Heart right ventricle (tissue), 16 donors: ENCODE measurements at regions of chr5 and their contacts with region 1.

Region 1: GRCh38 chr5:54415896-54416601 is 39.5 kb upstream of the HSPB3 start:
- DNase-seq: no peak
- ATAC-seq: no peak
- H3K4me3 ChIP-seq: no peak overlapping the region
- H3K27ac ChIP-seq: no peak overlapping the region
- H3K4me1 ChIP-seq: peaks cover 0 to 3% (median 0%) of the 10 kb centered on the region in 9 donors
- H3K27me3 ChIP-seq: no peaks in the 10 kb centered on the region
- CTCF ChIP-seq: no peak

Region 2: GRCh38 chr5:54230936-54231685 is 184.9 kb before region 1 on chr5:
- intact Hi-C with region 1: no loop called
- DNase-seq: no peak
- ATAC-seq: no peak
- H3K4me3 ChIP-seq: no peak overlapping the region
- H3K27ac ChIP-seq: no peak overlapping the region
- H3K4me1 ChIP-seq: peaks cover 0 to 67% (median 25%) of the 10 kb centered on the region in 9 donors
- H3K27me3 ChIP-seq: no peaks in the 10 kb centered on the region
- CTCF ChIP-seq: no peak

Region 3: DNA sequence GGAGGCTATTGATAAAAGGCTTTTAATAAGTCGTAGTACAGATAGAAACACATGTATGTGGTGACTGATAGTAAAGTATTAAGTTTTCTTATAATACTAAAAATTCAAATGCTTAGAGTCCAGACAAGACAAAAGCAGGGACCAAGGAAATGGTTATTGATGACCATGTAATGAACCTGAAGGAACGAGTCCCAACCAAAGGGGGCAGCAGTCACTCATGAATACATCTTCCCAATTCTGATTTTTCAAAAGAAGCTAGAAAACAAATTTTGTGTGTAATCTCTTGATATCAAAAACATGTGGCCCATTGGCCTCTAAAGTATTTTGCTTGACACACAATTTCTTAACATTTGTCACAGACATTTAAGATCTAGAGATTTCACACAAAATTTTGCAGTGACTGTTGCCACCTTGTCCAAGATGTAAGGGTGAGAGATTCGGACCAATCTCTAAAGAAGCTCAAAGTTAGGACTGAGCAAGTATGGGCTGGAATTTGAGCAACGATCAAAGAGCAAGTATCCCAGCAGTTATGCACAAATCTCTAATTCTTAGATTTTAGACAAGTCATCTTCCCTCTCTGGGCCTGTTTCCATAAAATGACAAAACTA is 172.5 kb before region 1 on chr5:
- intact Hi-C with region 1: loop called in 4 of 10 experiments (anchors 2 to 5 kb)
- DNase-seq: peak in 1 of 2 donors; percentile 21
- ATAC-seq: no peak
- H3K4me3 ChIP-seq: no peak overlapping the region
- H3K27ac ChIP-seq: no peak overlapping the region
- H3K4me1 ChIP-seq: peaks cover 0 to 70% (median 14%) of the 10 kb centered on the region in 9 donors
- H3K27me3 ChIP-seq: no peaks in the 10 kb centered on the region
- CTCF ChIP-seq: peak; percentile 29 to 81 (median 70)

Region 4: GRCh38 chr5:54249210-54250028 is 166.6 kb before region 1 on chr5:
- intact Hi-C with region 1: loop called in 8 of 10 experiments (anchors 2 to 5 kb)
- DNase-seq: peak; percentile 24 to 29
- ATAC-seq: peak in 3 of 8 donors; percentile 15 to 41 (median 25)
- H3K4me3 ChIP-seq: no peak overlapping the region
- H3K27ac ChIP-seq: peak overlapping the region in 1 of 10 donors; percentile 70
- H3K4me1 ChIP-seq: peaks cover 0 to 89% (median 30%) of the 10 kb centered on the region in 9 donors
- H3K27me3 ChIP-seq: no peaks in the 10 kb centered on the region
- CTCF ChIP-seq: no peak

Region 5: DNA sequence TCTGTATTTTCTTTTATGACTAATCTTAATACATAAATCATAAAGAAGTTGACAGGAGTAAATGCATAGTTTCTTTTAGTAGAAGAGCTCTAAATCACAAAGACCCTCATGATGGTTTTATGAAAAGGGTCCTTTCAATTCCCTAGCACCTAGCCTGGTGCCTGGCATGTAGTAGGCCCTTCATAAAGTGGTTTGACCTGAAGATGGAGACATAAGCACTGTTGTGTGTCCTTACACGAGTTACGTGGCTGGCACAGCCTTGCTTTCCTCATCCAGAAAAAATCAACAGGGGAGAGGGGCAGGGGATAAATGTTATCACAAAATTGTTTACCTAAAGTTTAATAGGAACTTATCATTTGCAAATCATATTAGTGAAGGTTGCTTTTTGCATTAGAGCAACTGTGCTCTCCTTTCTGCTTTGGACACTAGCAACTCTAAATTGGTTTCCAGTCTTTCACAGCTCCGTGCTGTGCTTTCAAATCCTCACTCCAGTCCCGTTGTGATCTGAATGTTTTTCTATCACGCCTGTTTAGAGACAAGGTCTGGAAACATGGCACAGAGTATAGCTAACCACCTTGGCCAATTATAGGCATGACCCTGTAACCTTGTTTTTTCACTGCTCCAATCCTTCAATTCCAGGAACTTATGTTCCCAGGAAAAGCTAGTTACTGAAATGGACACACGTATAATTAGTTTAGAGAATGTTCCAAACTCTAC is 161.4 kb before region 1 on chr5:
- intact Hi-C with region 1: loop called in 9 of 10 experiments (anchors 2 to 5 kb)
- DNase-seq: peak in 1 of 2 donors; percentile 30
- ATAC-seq: peak; percentile 66 to 90 (median 86)
- H3K4me3 ChIP-seq: peak overlapping the region in 9 of 10 donors; percentile 4 to 46 (median 25)
- H3K27ac ChIP-seq: peak overlapping the region; percentile 20 to 75 (median 65)
- H3K4me1 ChIP-seq: peaks cover 0 to 82% (median 37%) of the 10 kb centered on the region in 9 donors
- H3K27me3 ChIP-seq: no peaks in the 10 kb centered on the region
- CTCF ChIP-seq: peak; percentile 15 to 70 (median 49)

Region 6: GRCh38 chr5:54310433-54311175 is 105.4 kb before region 1 on chr5 and contains the start of gene ARL15:
- intact Hi-C with region 1: loop called in 9 of 10 experiments (anchors 5 to 10 kb)
- DNase-seq: peak; percentile 98 to 99
- ATAC-seq: peak; percentile 97 to 99 (median 98)
- H3K4me3 ChIP-seq: peak within 1 kb of the TSS; percentile 73 to 96 (median 87)
- H3K27ac ChIP-seq: peak within 1 kb of the TSS; percentile 75 to 95 (median 90)
- H3K4me1 ChIP-seq: peaks cover 0 to 34% (median 25%) of the 10 kb centered on the region in 9 donors
- H3K27me3 ChIP-seq: no peaks in the 10 kb centered on the region
- CTCF ChIP-seq: no peak
- total RNA-seq, gene ARL15: 22.6 to 31.8 (median 28.7) TPM

Region 7: DNA sequence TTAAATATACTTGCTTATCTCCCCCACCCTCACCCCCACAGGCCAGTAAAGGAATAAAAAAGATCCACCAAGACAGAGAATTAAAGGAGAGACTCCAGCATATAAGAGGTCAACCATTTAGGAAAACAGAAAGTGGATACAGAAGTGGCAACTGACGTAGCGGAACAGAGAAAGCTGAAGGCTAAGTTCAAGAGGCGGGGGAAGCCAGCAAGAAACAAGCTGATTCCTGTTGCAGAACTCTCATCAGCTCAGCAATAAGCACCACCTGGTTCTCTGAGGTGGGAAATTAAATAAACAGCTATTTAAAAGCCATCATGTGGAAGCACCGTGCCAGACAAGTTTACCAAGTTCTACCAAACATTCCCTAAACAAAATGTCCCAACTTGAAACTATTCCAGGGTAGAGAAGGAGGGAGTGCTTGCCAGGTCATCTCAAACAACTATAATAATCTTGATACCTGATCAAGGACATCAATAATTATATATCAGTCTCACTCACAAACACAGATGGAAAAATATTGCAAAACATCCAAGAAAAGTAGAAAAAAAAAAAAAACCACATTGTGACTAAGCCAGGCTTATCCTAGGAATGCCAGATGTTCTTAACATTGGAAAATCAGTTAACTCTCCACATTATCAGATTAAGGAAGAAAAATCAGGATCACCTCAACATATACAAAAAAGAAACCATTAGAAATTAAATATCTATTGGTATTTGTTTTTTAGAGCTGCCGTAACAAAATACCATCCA is 98.4 kb before region 1 on chr5:
- intact Hi-C with region 1: loop called in 9 of 10 experiments (anchors 5 to 10 kb)
- DNase-seq: no peak
- ATAC-seq: no peak
- H3K4me3 ChIP-seq: no peak overlapping the region
- H3K27ac ChIP-seq: no peak overlapping the region
- H3K4me1 ChIP-seq: peaks cover 0 to 7% (median 0%) of the 10 kb centered on the region in 9 donors
- H3K27me3 ChIP-seq: no peaks in the 10 kb centered on the region
- CTCF ChIP-seq: no peak

Region 8: DNA sequence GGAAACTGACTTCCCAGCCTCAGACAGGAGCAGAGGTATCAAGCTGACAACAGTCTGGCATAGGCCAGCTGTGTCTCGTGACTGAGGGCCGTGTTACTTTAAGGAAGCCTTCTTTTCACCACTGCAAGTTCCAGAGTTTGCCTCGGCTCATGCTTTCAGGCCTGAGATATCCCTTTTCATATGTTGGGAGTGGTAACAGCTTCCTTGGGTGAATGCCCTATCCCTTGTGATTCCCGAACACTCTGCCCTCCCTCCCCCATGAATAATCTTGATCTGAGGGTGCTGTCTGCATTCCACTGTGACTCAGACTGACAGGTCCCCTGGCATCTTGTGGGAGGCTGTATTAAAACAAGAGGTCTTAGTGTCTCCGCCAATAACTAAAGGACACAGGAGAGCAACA is 56.0 kb before region 1 on chr5:
- intact Hi-C with region 1: loop called in 1 of 10 experiments (anchors 10 kb)
- DNase-seq: no peak
- ATAC-seq: peak in 5 of 8 donors; percentile 17 to 60 (median 31)
- H3K4me3 ChIP-seq: no peak overlapping the region
- H3K27ac ChIP-seq: no peak overlapping the region
- H3K4me1 ChIP-seq: peaks cover 0 to 36% (median 16%) of the 10 kb centered on the region in 9 donors
- H3K27me3 ChIP-seq: no peaks in the 10 kb centered on the region
- CTCF ChIP-seq: no peak

Region 9: DNA sequence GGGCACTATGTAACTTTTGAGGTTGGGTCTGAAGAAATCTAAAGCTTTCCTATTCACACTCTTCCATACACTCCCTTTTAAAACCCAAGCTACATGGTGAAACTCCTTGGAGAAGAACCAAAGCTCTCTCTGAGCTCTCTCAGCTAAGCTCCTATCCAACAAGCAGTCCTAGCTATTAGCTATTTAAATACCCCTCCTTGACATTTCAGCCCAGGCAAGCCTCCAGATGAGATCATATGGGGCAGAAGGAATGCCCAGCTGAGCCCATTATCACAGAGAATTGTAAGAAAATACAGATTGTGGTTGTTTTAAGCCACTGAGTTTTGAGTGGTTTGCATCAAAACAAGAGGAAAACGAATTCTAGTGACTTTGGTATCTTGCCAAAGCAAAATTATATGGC is 54.6 kb after region 1 on chr5:
- intact Hi-C with region 1: no loop called
- DNase-seq: no peak
- ATAC-seq: peak in 5 of 8 donors; percentile 37 to 75 (median 49)
- H3K4me3 ChIP-seq: peak overlapping the region in 1 of 10 donors; percentile 40
- H3K27ac ChIP-seq: peak overlapping the region in 5 of 10 donors; percentile 5 to 72 (median 41)
- H3K4me1 ChIP-seq: peaks cover 3 to 28% (median 15%) of the 10 kb centered on the region in 9 donors
- H3K27me3 ChIP-seq: no peaks in the 10 kb centered on the region
- CTCF ChIP-seq: no peak